Caco-2 (cell line): ENCODE measurements at regions of chr19 and their contacts with region 1.

Region 1: GRCh38 chr19:30227661-30228428 is 144.3 kb upstream of the ZNF536 start:
- DNase-seq: peak; percentile 56 to 82
- H3K4me3 ChIP-seq: peak overlapping the region; percentile 47
- H3K4me3 Mint-ChIP-seq: peak overlapping the region; percentile 97
- H3K27ac Mint-ChIP-seq: no peak overlapping the region
- H3K4me1 ChIP-seq: peaks cover 5% of the 10 kb centered on the region; the same call in 1 of the 2 replicates
- H3K4me1 Mint-ChIP-seq: peaks cover 11% of the 10 kb centered on the region
- H3K27me3 ChIP-seq: no peaks in the 10 kb centered on the region
- H3K27me3 Mint-ChIP-seq: peaks cover 33% of the 10 kb centered on the region
- CTCF ChIP-seq: peak; percentile 33 to 64

Region 2: DNA sequence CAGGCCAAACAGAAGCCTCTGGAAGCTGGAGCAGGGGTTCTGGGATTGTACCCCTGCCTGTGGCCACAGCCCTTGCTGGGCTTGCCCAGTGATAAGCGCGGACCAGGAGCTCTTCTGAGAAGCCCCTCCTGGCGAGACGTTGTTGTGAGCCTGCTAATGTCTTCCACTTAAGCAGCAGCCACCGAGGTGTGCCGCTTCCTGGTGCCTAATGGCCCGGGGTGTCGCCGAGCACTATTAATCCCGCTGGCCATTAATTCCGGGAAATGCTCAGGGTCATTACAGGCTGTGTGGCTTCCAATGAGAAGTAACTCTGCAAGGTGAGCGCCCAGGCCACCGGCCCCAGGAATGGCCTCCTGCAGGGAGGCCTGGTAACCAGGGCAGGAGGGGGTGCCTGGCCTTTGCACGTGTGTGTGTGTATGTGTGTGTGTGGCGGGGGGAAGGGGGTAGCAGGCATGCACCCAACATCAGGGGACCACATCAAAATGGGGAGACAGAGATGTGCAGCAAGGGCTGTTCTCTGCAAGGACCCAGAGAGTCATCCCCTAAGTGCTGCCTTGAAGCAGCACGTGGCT is 110.8 kb before region 1 on chr19:
- CTCF ChIA-PET with region 1: no interaction called
- POLR2A ChIA-PET with region 1: no interaction called
- intact Hi-C with region 1: no loop called
- DNase-seq: peak in 1 of 2 experiments; percentile 29
- H3K4me3 ChIP-seq: no peak overlapping the region
- H3K4me3 Mint-ChIP-seq: no peak overlapping the region
- H3K27ac Mint-ChIP-seq: no peak overlapping the region
- H3K4me1 ChIP-seq: no peaks in the 10 kb centered on the region
- H3K4me1 Mint-ChIP-seq: no peaks in the 10 kb centered on the region
- H3K27me3 ChIP-seq: no peaks in the 10 kb centered on the region
- H3K27me3 Mint-ChIP-seq: peaks cover 8% of the 10 kb centered on the region
- CTCF ChIP-seq: no peak

Region 3: DNA sequence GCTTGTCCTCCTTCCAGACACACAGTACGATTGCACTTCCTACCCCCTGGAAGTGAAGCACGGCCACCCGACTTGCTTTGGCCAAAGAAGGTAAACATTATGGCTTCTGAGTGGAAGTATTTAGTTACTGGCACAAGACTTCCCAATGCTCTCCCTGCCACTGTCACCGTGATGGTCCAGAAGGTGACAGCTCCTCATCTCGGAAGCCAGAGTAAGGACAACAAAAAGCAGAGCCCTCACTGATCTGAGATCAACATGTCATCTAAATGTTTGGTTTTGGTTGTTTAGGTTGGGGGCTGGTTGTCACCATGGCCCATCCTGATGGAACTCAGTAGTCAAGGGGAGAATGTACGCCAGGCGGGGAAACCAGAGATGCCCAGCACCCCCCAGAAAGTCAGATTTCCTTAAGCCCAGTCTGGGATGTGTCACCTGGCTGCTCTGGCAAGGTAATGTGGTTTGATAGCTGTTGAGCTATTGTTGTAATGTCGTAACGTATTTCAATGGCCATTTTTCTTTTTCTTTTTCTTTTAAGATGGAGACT is 25.7 kb before region 1 on chr19:
- CTCF ChIA-PET with region 1: no interaction called
- POLR2A ChIA-PET with region 1: interaction called, 15 read pairs
- intact Hi-C with region 1: no loop called
- DNase-seq: no peak
- H3K4me3 ChIP-seq: no peak overlapping the region
- H3K4me3 Mint-ChIP-seq: no peak overlapping the region
- H3K27ac Mint-ChIP-seq: no peak overlapping the region
- H3K4me1 ChIP-seq: no peaks in the 10 kb centered on the region
- H3K4me1 Mint-ChIP-seq: no peaks in the 10 kb centered on the region
- H3K27me3 ChIP-seq: no peaks in the 10 kb centered on the region
- H3K27me3 Mint-ChIP-seq: peaks cover 7% of the 10 kb centered on the region
- CTCF ChIP-seq: no peak

Region 4: DNA sequence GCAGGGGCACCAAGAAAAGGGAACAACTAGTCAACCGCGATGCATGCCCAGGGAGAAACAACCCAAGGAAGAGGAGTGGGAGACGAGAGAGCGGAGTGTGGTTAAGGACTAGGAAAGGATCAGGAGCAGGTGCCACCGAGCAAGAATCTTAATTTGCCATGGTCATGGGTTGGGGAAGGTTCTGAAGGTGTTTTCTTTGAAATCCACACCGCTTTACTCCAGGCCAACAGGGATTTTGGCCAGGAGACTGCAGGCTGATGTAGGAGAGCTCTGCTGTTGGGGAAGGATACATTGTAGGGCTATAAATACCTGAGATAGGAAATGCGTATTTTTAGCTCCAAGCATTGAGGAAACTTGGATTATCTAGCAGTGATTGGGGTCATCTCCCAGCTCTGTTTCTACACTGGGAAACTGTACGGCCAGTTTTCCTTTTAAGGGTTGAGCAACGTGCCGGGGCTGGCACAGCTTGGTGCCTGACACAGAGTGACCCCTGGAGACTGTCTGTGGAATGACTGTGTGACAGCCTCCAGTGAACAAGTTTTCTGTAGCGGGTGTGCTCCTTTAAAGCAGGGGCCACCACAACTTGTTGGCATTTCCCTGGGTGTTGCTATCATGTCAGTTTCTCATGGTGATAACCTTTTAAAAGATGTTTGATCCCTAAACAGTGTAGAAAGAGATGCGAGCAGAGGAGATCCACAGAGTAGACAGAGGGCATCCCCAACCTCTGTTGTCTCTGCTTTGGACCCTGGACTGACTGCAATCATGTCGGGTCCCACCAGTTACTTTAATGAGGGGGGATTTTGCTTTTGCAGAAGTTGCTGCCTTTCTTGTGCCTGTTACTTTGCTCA is 178.6 kb after region 1 on chr19:
- CTCF ChIA-PET with region 1: no interaction called
- POLR2A ChIA-PET with region 1: no interaction called
- intact Hi-C with region 1: loop called (anchors 5 kb)
- DNase-seq: peak in 1 of 2 experiments; percentile 38
- H3K4me3 ChIP-seq: no peak overlapping the region
- H3K4me3 Mint-ChIP-seq: no peak overlapping the region
- H3K27ac Mint-ChIP-seq: no peak overlapping the region
- H3K4me1 ChIP-seq: no peaks in the 10 kb centered on the region
- H3K4me1 Mint-ChIP-seq: no peaks in the 10 kb centered on the region
- H3K27me3 ChIP-seq: no peaks in the 10 kb centered on the region
- H3K27me3 Mint-ChIP-seq: peaks cover 2% of the 10 kb centered on the region
- CTCF ChIP-seq: peak; percentile 34 to 55

Region 5: GRCh38 chr19:30649934-30650614 is 422.2 kb after region 1 on chr19:
- CTCF ChIA-PET with region 1: no interaction called
- POLR2A ChIA-PET with region 1: no interaction called
- intact Hi-C with region 1: loop called (anchors 1 kb)
- DNase-seq: peak in 1 of 2 experiments; percentile 48
- H3K4me3 ChIP-seq: no peak overlapping the region
- H3K4me3 Mint-ChIP-seq: no peak overlapping the region
- H3K27ac Mint-ChIP-seq: no peak overlapping the region
- H3K4me1 ChIP-seq: no peaks in the 10 kb centered on the region
- H3K4me1 Mint-ChIP-seq: no peaks in the 10 kb centered on the region
- H3K27me3 ChIP-seq: no peaks in the 10 kb centered on the region; the same call in 1 of the 2 replicates
- H3K27me3 Mint-ChIP-seq: peaks cover 28% of the 10 kb centered on the region
- CTCF ChIP-seq: peak; percentile 77 to 91